Naive thymus-derived CD4-positive, alpha-beta T cell (primary cell): ENCODE measurements at regions of chr14 and their contacts with region 1.

Region 1: DNA sequence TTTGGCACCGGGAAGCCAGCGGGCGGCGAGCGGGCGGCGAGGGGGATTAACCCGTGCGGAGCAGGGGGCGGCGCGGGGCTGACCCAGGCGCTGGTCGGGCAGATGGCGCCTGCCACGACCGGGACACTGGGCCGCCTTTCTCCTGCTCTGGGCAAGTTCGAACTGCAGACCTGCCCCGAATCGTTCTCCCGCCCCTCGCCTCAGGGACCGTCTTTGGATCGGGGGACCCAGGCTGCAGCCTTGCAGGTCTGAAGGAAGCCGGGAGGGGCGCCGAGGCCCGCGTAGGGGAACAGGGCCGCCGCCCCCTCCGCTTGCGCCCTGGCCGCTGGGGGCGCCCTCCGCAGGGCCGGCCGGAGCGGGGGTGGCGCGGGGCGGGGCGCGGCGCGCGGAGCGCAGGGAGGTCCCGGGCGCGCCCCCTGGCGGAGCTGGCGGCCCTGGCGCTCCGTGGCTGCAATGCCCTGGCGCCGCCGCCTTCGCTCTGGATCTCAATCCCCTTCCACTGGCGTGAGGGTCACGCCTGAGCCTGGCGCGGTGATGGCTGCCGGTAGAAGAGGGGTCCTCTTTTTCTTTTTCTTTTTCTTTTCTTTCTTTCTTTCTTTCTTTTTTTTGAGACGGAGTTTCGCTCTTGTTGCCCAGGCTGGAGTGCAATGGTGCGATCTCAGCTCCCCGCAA is 449 bp upstream of the LTBP2 start:
- DNase-seq: peak; percentile 70 to 97 (median 87)
- ATAC-seq: peak; percentile 95
- H3K4me3 ChIP-seq: peak overlapping the region; percentile 72
- H3K4me3 Mint-ChIP-seq: peak overlapping the region; percentile 60 to 84 (median 78)
- H3K27ac ChIP-seq: peak overlapping the region; percentile 17
- H3K27ac Mint-ChIP-seq: peak overlapping the region in 1 of 9 donors; percentile 46
- H3K4me1 ChIP-seq: peaks cover 5 to 10% of the 10 kb centered on the region in 2 donors
- H3K4me1 Mint-ChIP-seq: peaks cover 23 to 46% (median 39%) of the 10 kb centered on the region in 7 donors
- H3K27me3 ChIP-seq: no peaks in the 10 kb centered on the region
- H3K27me3 Mint-ChIP-seq: peaks cover 0 to 55% (median 6%) of the 10 kb centered on the region in 5 donors

Region 2: DNA sequence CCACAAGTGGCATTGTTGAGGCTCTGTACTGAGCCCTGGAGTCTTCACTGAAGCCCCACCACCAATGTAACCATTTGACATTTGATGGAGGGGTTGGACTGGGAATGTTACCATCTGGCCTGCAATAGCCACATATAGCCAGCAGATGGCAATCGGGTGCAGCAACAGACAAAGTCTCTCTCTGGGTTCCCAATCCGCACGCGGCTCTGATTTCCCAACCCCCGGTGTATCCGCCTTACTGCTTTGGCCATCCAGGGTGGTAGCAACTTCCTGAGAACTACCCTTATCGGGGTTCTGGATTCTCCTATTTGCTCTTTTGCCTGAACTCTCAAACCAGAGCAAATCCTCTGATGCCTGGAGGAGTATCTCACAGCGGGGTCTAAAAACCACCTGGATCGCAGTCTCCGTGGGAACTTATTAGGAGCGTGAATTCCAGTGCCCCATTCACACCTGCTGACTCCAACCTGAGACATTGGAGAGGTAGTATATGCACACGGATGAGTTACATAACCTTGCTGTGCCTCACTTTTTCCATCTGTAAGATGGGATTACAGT is 250.0 kb before region 1 on chr14:
- CTCF ChIA-PET with region 1: no interaction called
- POLR2A ChIA-PET with region 1: no interaction called
- intact Hi-C with region 1: loop called (anchors 1 to 2 kb)
- DNase-seq: peak; percentile 21 to 62 (median 57)
- ATAC-seq: peak; percentile 84
- H3K4me3 ChIP-seq: no peak overlapping the region
- H3K4me3 Mint-ChIP-seq: no peak overlapping the region
- H3K27ac ChIP-seq: no peak overlapping the region
- H3K27ac Mint-ChIP-seq: no peak overlapping the region
- H3K4me1 ChIP-seq: no peaks in the 10 kb centered on the region
- H3K4me1 Mint-ChIP-seq: no peaks in the 10 kb centered on the region
- H3K27me3 ChIP-seq: no peaks in the 10 kb centered on the region
- H3K27me3 Mint-ChIP-seq: peaks cover 5 to 19% (median 13%) of the 10 kb centered on the region in 5 donors

Region 3: GRCh38 chr14:74712499-74713394 is 100.3 kb after region 1 on chr14 and contains the starts of genes AREL1 and FCF1:
- CTCF ChIA-PET with region 1: interaction called, 3 read pairs
- POLR2A ChIA-PET with region 1: interaction called, 8 read pairs
- intact Hi-C with region 1: loop called (anchors 1 to 2 kb)
- DNase-seq: peak; percentile 53 to 87 (median 82)
- ATAC-seq: peak; percentile 96
- H3K4me3 ChIP-seq: peak within 1 kb of the TSS; percentile 75
- H3K4me3 Mint-ChIP-seq: peak within 1 kb of the TSS; percentile 93 to 100 (median 97)
- H3K27ac ChIP-seq: peak within 1 kb of the TSS; percentile 96
- H3K27ac Mint-ChIP-seq: peak within 1 kb of the TSS; percentile 95 to 100 (median 98)
- H3K4me1 ChIP-seq: peaks cover 9 to 24% of the 10 kb centered on the region in 2 donors
- H3K4me1 Mint-ChIP-seq: peaks cover 33 to 79% (median 66%) of the 10 kb centered on the region in 7 donors
- H3K27me3 ChIP-seq: no peaks in the 10 kb centered on the region
- H3K27me3 Mint-ChIP-seq: no peaks in the 10 kb centered on the region
- total RNA-seq, gene AREL1: 35.6 to 52.0 (median 43.5) TPM
- total RNA-seq, gene FCF1: 36.5 to 66.6 (median 60.8) TPM

Region 4: GRCh38 chr14:74793506-74794168 is 181.2 kb after region 1 on chr14:
- CTCF ChIA-PET with region 1: interaction called, 5 read pairs
- POLR2A ChIA-PET with region 1: no interaction called
- intact Hi-C with region 1: loop called in 1 of 2 experiments (anchors 1 kb)
- DNase-seq: peak in 7 of 9 donors; percentile 21 to 50 (median 34)
- ATAC-seq: peak; percentile 53
- H3K4me3 ChIP-seq: peak overlapping the region; percentile 25
- H3K4me3 Mint-ChIP-seq: peak overlapping the region; percentile 62 to 89 (median 84)
- H3K27ac ChIP-seq: peak overlapping the region; percentile 60
- H3K27ac Mint-ChIP-seq: peak overlapping the region; percentile 80 to 96 (median 88)
- H3K4me1 ChIP-seq: peaks cover 20% of the 10 kb centered on the region in 2 donors
- H3K4me1 Mint-ChIP-seq: peaks cover 39 to 69% (median 60%) of the 10 kb centered on the region in 7 donors
- H3K27me3 ChIP-seq: no peaks in the 10 kb centered on the region
- H3K27me3 Mint-ChIP-seq: no peaks in the 10 kb centered on the region

Region 5: GRCh38 chr14:74905375-74906142 is 293.1 kb after region 1 on chr14:
- CTCF ChIA-PET with region 1: interaction called, 12 read pairs
- POLR2A ChIA-PET with region 1: no interaction called
- intact Hi-C with region 1: loop called (anchors 1 kb)
- DNase-seq: peak; percentile 56 to 83 (median 71)
- ATAC-seq: peak; percentile 76
- H3K4me3 ChIP-seq: no peak overlapping the region
- H3K4me3 Mint-ChIP-seq: no peak overlapping the region
- H3K27ac ChIP-seq: peak overlapping the region; percentile 38
- H3K27ac Mint-ChIP-seq: peak overlapping the region in 5 of 9 donors; percentile 48 to 81 (median 77)
- H3K4me1 ChIP-seq: peaks cover 0 to 6% of the 10 kb centered on the region in 2 donors
- H3K4me1 Mint-ChIP-seq: peaks cover 0 to 23% (median 4%) of the 10 kb centered on the region in 7 donors
- H3K27me3 ChIP-seq: no peaks in the 10 kb centered on the region
- H3K27me3 Mint-ChIP-seq: no peaks in the 10 kb centered on the region

Region 6: DNA sequence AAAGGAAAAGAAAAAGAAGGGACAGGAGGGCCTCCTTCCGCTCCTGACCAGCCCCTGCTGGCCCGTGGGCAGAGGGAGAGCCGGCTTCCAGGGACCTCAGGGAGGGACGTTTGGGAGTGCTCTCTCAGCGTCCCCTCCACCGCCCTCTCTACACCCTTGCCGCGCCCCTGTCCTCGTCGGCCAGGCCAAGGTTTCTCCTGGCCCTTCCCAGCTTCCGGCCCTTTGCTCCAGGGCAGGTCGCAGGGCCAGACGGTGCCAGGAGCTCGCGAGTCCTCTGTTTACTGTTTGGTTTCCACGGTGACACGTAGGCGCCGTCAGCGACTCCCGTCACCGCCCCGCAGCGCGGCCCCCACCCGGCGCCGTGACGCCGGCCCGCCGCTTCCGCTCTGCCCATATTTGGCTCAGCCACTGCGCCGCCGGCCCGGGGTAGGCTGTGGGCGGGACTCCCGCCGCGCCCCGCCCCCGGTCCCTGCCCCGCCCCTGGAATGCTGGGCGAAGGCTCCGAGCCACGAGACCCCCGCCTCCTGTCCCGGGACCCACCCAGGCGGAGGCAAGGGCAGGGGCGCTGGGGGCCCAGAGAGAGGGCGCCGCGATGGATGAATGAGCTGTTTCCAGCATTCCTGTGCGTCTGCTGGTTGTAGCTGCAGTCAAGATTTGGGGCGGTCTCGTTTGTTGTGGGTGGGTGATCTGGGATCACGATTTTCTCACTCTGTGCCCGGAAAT is 681.6 kb after region 1 on chr14:
- CTCF ChIA-PET with region 1: no interaction called
- POLR2A ChIA-PET with region 1: no interaction called
- intact Hi-C with region 1: loop called in 1 of 2 experiments (anchors 5 kb)
- DNase-seq: peak; percentile 92 to 98 (median 96)
- ATAC-seq: peak; percentile 92
- H3K4me3 ChIP-seq: peak overlapping the region; percentile 61
- H3K4me3 Mint-ChIP-seq: peak overlapping the region; percentile 79 to 93 (median 91)
- H3K27ac ChIP-seq: peak overlapping the region; percentile 96
- H3K27ac Mint-ChIP-seq: peak overlapping the region; percentile 85 to 97 (median 94)
- H3K4me1 ChIP-seq: peaks cover 17 to 25% of the 10 kb centered on the region in 2 donors
- H3K4me1 Mint-ChIP-seq: peaks cover 10 to 26% (median 22%) of the 10 kb centered on the region in 7 donors
- H3K27me3 ChIP-seq: no peaks in the 10 kb centered on the region
- H3K27me3 Mint-ChIP-seq: peaks cover 0 to 24% (median 0%) of the 10 kb centered on the region in 5 donors